Panc1 (cell line): ENCODE measurements at regions of chr10 and their contacts with region 1.

Region 1: DNA sequence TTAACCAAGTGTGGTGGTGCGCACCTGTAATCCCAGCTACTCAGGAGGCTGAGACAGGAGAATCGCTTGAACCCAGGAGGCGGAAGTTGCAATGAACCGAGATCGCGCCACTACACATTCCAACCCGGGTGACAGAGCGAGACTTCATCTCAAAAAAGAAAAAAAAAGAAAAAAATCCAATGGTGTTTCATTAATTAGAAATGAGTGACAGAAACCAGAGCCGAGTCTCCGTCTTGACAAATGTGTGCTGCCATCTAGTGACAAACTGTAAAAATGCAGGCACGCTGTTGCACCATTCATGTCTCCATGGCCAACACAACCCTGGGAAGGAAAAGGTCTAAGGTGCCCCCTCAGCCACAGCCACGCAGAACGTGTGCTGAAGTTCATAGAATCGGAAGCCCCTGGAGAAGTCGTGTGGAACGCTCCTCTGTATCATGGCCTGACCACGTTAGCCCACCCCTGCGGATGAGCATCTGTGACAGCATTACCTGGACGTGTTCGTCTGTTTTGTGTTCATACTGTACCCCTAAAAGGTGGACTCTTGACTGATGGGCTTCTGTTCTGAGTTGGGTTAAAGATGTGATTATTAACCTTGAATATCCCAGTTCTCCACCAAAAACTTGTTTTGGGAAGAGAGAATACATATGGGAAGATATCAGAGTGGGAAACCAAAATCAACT is 94.9 kb downstream of the LYZL2 start:
- DNase-seq: peak; percentile 18
- ATAC-seq: peak; percentile 68; the same call in 1 of the 2 replicates
- H3K4me3 ChIP-seq: no peak overlapping the region
- H3K27ac ChIP-seq: no peak overlapping the region
- H3K4me1 ChIP-seq: no peaks in the 10 kb centered on the region
- H3K27me3 ChIP-seq: no peaks in the 10 kb centered on the region
- CTCF ChIP-seq: peak; percentile 80

Region 2: GRCh38 chr10:30392564-30392990 is 142.0 kb before region 1 on chr10:
- CTCF ChIA-PET with region 1: no interaction called
- POLR2A ChIA-PET with region 1: no interaction called
- in situ Hi-C with region 1: no loop called
- intact Hi-C with region 1: loop called (anchors 1 kb)
- DNase-seq: peak; percentile 52
- ATAC-seq: peak; percentile 100
- H3K4me3 ChIP-seq: no peak overlapping the region
- H3K27ac ChIP-seq: no peak overlapping the region
- H3K4me1 ChIP-seq: no peaks in the 10 kb centered on the region
- H3K27me3 ChIP-seq: 0 out of 2 replicates have a peak, but pooled peaks cover 3% of the 10 kb centered on the region
- CTCF ChIP-seq: peak; percentile 88

Region 3: DNA sequence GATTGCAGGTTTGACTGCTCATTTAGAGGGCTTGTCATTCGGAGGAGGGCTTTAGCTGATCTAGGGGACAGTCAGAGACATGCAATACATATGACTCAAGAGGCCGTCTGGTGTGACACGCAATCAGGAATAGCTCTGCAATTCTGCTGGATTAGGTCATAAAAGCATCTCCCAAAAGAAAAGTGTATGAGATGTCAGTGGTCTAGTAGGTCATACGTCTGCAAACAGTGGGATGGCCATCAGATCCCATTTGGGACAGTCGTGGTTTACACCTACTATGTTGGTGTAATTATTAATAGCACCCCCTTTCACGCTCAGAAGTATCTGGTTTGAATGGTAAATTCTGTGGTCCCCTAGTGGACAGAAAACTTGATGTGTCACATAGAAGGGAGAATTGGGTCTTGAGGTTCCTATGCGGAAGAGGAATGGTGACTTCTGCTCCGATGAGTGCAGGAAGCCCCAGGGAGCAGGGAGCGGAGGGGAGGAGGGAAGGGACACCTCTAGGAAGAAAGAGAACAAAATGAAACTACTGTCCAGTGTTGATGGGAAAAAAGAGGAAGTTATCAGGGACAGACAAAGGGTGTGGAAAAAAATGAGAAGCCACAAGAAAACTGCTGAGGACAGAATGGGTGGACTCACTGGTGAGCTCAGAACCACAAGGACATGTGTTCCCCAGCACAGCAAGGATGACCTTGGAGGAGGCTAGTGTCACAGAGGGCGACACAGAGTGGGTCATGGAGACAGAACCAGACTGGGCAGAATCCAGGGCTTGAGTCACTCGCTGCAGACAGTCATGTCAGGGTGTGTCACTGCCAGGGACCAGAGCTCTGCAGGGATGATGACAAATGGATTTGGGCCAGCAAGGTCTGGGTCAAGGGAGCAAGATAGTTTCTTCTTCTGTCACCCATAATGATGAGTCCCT is 40.7 kb before region 1 on chr10:
- CTCF ChIA-PET with region 1: no interaction called
- POLR2A ChIA-PET with region 1: no interaction called
- in situ Hi-C with region 1: no loop called
- intact Hi-C with region 1: no loop called
- DNase-seq: no peak
- ATAC-seq: no peak
- H3K4me3 ChIP-seq: no peak overlapping the region
- H3K27ac ChIP-seq: no peak overlapping the region
- H3K4me1 ChIP-seq: no peaks in the 10 kb centered on the region
- H3K27me3 ChIP-seq: no peaks in the 10 kb centered on the region
- CTCF ChIP-seq: peak; percentile 16; the same call in 1 of the 2 replicates